ENCODE measurements at regions of chr11 and their contacts with region 1.

Region 1: DNA sequence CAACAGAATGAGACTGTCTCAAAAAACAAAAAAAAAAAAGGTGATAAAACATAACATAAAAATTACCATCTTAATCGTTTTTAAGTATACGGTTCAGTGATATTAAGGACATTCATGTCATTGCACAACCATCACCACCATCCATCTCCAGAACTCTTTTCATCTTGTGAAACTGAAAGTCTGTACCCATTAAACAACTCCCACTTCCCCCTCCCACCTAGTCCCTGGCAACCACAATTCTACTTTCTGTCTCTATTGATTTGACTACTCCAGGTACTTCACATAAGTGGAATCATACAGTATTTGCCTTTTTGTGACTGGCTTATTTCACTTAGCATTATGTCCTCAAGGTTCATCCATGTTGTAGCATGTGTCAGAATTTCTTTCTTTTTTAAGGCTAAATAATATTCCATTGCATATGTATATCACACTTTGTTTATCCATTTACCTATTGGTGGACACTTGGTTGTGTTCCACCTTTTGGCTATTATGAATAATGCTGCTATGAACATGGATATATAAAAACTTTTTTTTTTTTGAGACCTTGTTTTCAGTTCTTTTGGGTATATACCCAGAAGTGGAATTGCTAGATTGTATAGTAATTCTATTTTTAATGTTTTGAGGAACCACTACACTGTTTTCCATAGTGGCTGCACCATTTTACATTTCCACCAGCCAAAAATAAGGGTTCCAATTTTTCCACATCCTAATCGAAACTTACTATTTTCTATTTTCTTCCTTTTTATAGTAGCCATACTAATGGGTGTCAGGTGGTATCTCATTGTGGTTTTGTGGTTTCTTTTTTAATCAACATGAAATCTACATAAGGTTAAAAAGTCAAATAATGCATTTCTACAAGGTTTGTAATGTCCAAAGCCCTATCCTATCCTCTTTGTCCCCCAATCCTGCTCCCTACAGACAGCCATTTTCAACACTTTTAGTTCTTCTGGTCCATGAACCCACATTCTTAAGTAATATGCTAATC is 23.4 kb upstream of the PIK3C2A start:
- DNase-seq: peak; percentile 67
- H3K4me3 Mint-ChIP-seq: no peak overlapping the region
- H3K27ac Mint-ChIP-seq: no peak overlapping the region
- H3K4me1 Mint-ChIP-seq: peaks cover 19% of the 10 kb centered on the region
- H3K27me3 Mint-ChIP-seq: peaks cover 7% of the 10 kb centered on the region

Region 2: GRCh38 chr11:17145972-17146371 is 85.2 kb before region 1 on chr11:
- CTCF ChIA-PET with region 1: no interaction called
- intact Hi-C with region 1: no loop called
- DNase-seq: no peak
- H3K4me3 Mint-ChIP-seq: no peak overlapping the region
- H3K27ac Mint-ChIP-seq: no peak overlapping the region
- H3K4me1 Mint-ChIP-seq: peaks cover 10% of the 10 kb centered on the region
- H3K27me3 Mint-ChIP-seq: no peaks in the 10 kb centered on the region

Region 3: DNA sequence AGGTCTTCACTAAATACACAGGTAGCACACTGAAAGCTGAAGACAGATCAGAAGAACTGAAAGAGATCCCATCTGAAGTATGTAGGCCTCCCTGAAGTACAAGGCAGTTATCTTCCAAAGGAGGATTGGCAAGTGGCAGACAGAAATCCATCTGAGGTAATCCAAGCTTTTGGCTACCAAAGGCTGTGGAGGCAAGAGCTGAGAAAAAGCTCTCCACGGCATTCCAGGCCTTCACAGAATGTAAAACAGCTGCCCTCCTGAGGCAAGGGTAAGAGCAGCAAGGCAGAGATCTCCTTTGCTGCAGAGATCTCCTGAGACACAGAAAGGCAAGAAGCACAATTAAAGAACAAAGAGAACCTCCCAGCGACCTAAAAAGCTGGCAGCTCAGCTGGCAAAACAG is 42.5 kb before region 1 on chr11:
- CTCF ChIA-PET with region 1: no interaction called
- intact Hi-C with region 1: no loop called
- DNase-seq: no peak
- H3K4me3 Mint-ChIP-seq: no peak overlapping the region
- H3K27ac Mint-ChIP-seq: no peak overlapping the region
- H3K4me1 Mint-ChIP-seq: peaks cover 7% of the 10 kb centered on the region
- H3K27me3 Mint-ChIP-seq: no peaks in the 10 kb centered on the region

Region 4: GRCh38 chr11:17207317-17208258 is 23.6 kb before region 1 on chr11 and contains the start of gene PIK3C2A:
- CTCF ChIA-PET with region 1: interaction called, 6 read pairs
- intact Hi-C with region 1: loop called (anchors 1 kb)
- DNase-seq: peak; percentile 97
- H3K4me3 Mint-ChIP-seq: peak within 1 kb of the TSS; percentile 99
- H3K27ac Mint-ChIP-seq: peak within 1 kb of the TSS; percentile 92
- H3K4me1 Mint-ChIP-seq: peaks cover 30% of the 10 kb centered on the region
- H3K27me3 Mint-ChIP-seq: no peaks in the 10 kb centered on the region
- total RNA-seq, gene PIK3C2A: 16.4 to 17.3 TPM

Region 5: DNA sequence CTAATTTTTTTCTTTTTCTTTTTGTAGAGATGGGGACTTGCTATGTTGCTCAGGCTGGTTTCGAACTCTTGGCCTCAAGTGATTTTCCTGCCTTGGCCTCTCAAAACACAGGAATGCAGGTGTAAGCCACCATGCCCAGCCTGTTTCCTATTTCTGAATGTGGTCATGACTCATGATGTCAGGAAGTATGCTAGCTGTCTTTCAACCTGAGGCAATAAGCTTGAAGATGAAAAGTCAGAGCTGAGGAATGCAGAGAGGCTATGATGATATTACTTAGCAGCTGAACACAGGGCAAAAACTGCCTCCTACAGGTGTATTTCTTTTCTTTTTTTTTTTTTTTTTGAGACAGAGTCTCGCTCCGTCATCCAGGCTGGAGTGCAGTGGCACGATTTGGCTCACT is 36.4 kb after region 1 on chr11:
- CTCF ChIA-PET with region 1: interaction called, 4 read pairs
- intact Hi-C with region 1: loop called (anchors 2 kb)
- DNase-seq: peak; percentile 48
- H3K4me3 Mint-ChIP-seq: no peak overlapping the region
- H3K27ac Mint-ChIP-seq: no peak overlapping the region
- H3K4me1 Mint-ChIP-seq: peaks cover 12% of the 10 kb centered on the region
- H3K27me3 Mint-ChIP-seq: no peaks in the 10 kb centered on the region

Region 6: GRCh38 chr11:17298302-17298701 is 67.1 kb after region 1 on chr11:
- CTCF ChIA-PET with region 1: interaction called, 6 read pairs
- intact Hi-C with region 1: loop called (anchors 1 kb)
- DNase-seq: peak; percentile 82
- H3K4me3 Mint-ChIP-seq: no peak overlapping the region
- H3K27ac Mint-ChIP-seq: peak overlapping the region; percentile 30
- H3K4me1 Mint-ChIP-seq: peaks cover 41% of the 10 kb centered on the region
- H3K27me3 Mint-ChIP-seq: no peaks in the 10 kb centered on the region

Region 7: GRCh38 chr11:17343907-17344306 is 112.7 kb after region 1 on chr11:
- CTCF ChIA-PET with region 1: interaction called, 10 read pairs
- intact Hi-C with region 1: no loop called
- DNase-seq: peak; percentile 90
- H3K4me3 Mint-ChIP-seq: no peak overlapping the region
- H3K27ac Mint-ChIP-seq: peak overlapping the region; percentile 51
- H3K4me1 Mint-ChIP-seq: peaks cover 19% of the 10 kb centered on the region
- H3K27me3 Mint-ChIP-seq: no peaks in the 10 kb centered on the region

Region 8: GRCh38 chr11:17384002-17384511 is 152.9 kb after region 1 on chr11:
- CTCF ChIA-PET with region 1: interaction called, 23 read pairs
- intact Hi-C with region 1: loop called (anchors 1 kb)
- DNase-seq: peak; percentile 88
- H3K4me3 Mint-ChIP-seq: no peak overlapping the region
- H3K27ac Mint-ChIP-seq: no peak overlapping the region
- H3K4me1 Mint-ChIP-seq: peaks cover 2% of the 10 kb centered on the region
- H3K27me3 Mint-ChIP-seq: no peaks in the 10 kb centered on the region

Region 9: DNA sequence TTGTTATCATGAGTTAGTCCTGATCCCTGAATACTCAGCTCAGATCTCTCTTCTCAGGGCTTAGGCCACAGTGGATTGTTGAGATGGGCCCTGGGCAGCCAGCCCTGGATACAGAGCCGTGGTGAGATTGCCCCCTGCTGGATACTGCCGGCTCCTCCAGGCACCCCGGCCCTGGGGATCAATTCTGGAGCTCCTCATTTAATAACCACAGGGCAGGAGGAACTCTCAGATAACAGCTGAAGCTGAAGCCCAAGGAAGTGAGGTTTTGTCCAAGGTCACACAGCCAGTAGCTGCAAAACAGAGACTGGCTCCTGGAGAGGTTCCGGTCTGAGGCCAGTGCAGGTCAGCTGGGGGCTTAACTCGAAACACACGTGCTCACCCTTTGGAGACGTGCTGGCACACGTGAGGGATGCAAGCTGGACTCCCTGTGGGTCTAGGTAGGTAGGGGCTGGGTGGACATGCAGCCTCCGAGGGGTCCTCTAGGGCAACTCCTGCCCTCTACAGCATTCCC is 297.1 kb after region 1 on chr11:
- CTCF ChIA-PET with region 1: interaction called, 14 read pairs
- intact Hi-C with region 1: loop called (anchors 1 kb)
- DNase-seq: peak; percentile 68
- H3K4me3 Mint-ChIP-seq: no peak overlapping the region
- H3K27ac Mint-ChIP-seq: no peak overlapping the region
- H3K4me1 Mint-ChIP-seq: no peaks in the 10 kb centered on the region
- H3K27me3 Mint-ChIP-seq: no peaks in the 10 kb centered on the region